Activated B cell treated with CpG ODN at 0.5 μM for 24 hours (primary cell): ENCODE measurements at regions of chr15 and their contacts with region 1.

Region 1: GRCh38 chr15:90249203-90249863 is at the start of gene TTLL13:
- DNase-seq: peak; percentile 60
- ATAC-seq: peak; percentile 79
- H3K4me3 Mint-ChIP-seq: peak within 1 kb of the TSS; percentile 76
- H3K27ac Mint-ChIP-seq: peak within 1 kb of the TSS; percentile 4
- H3K4me1 Mint-ChIP-seq: peaks cover 14% of the 10 kb centered on the region
- H3K27me3 Mint-ChIP-seq: no peaks in the 10 kb centered on the region
- CTCF ChIP-seq: no peak
- total RNA-seq, gene TTLL13: 0.49 and 2.2 TPM in 2 replicates

Region 2: GRCh38 chr15:89171136-89172072 is 1077.9 kb before region 1 on chr15:
- CTCF ChIA-PET with region 1: no interaction called
- POLR2A ChIA-PET with region 1: no interaction called
- intact Hi-C with region 1: no loop called
- DNase-seq: no peak
- ATAC-seq: no peak
- H3K4me3 Mint-ChIP-seq: no peak overlapping the region
- H3K27ac Mint-ChIP-seq: no peak overlapping the region
- H3K4me1 Mint-ChIP-seq: peaks cover 3% of the 10 kb centered on the region
- H3K27me3 Mint-ChIP-seq: no peaks in the 10 kb centered on the region
- CTCF ChIP-seq: peak; percentile 23

Region 3: DNA sequence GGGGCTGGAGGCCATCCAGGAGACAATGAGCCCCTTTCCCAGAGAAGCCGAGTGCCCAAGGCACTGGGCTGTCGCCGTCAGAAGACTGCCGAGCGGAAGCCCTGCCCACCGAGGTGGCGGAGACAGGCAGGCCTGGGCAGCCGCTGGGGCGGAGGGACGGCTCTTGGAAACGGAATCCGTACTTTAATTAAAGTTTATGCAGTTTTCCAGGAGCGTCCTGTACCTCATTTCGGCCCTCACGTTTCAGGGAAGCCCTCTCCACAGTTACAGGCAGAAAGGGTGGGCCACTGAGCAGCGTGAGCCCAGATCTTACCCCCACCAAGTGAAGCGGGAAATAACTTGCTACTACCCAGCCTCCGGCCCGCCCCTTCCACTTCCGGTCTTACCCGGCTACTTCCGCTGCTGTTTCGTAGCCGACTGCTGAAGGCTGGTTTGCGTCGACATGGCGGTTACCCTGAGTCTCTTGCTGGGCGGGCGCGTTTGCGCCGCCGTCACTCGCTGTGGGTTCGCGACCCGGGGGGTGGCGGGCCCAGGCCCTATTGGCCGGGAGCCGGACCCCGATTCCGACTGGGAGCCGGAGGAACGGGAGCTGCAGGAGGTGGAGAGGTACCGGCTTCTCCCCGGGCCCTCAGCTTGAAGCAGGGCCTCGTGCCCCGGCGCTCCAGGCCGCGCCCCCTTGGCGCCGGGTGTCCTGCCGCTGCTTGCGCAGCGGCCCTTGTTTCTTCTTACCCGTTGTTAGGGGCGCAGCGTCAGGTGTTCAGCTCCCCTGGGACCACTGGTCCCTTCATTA is 16.1 kb after region 1 on chr15 and contains the start of gene NGRN:
- CTCF ChIA-PET with region 1: interaction called, 3 read pairs
- POLR2A ChIA-PET with region 1: interaction called, 12 read pairs
- intact Hi-C with region 1: no loop called
- DNase-seq: peak; percentile 93
- ATAC-seq: peak; percentile 85
- H3K4me3 Mint-ChIP-seq: peak within 1 kb of the TSS; percentile 93
- H3K27ac Mint-ChIP-seq: peak within 1 kb of the TSS; percentile 91
- H3K4me1 Mint-ChIP-seq: peaks cover 51% of the 10 kb centered on the region
- H3K27me3 Mint-ChIP-seq: no peaks in the 10 kb centered on the region
- CTCF ChIP-seq: no peak
- total RNA-seq, gene NGRN: 32.8 and 34.1 TPM in 2 replicates

Region 4: GRCh38 chr15:91291673-91292072 is 1042.3 kb after region 1 on chr15:
- CTCF ChIA-PET with region 1: no interaction called
- POLR2A ChIA-PET with region 1: interaction called, 13 read pairs
- intact Hi-C with region 1: no loop called
- DNase-seq: no peak
- ATAC-seq: peak; percentile 67
- H3K4me3 Mint-ChIP-seq: no peak overlapping the region
- H3K27ac Mint-ChIP-seq: no peak overlapping the region
- H3K4me1 Mint-ChIP-seq: peaks cover 3% of the 10 kb centered on the region
- H3K27me3 Mint-ChIP-seq: peaks cover 1% of the 10 kb centered on the region
- CTCF ChIP-seq: no peak